ENCODE measurements at regions of chr5 and their contacts with region 1.

Region 1: GRCh38 chr5:157335534-157336422 is 69.9 kb downstream of the CYFIP2 start:
- DNase-seq: no peak
- ATAC-seq: peak in 4 of 8 donors; percentile 26 to 76 (median 51)
- H3K4me3 ChIP-seq: no peak overlapping the region
- H3K27ac ChIP-seq: peak overlapping the region in 1 of 10 donors; percentile 26
- H3K4me1 ChIP-seq: peaks cover 0 to 9% (median 0%) of the 10 kb centered on the region in 9 donors
- H3K27me3 ChIP-seq: no peaks in the 10 kb centered on the region
- CTCF ChIP-seq: no peak

Region 2: GRCh38 chr5:157366741-157367674 is 31.2 kb after region 1 on chr5:
- intact Hi-C with region 1: no loop called
- DNase-seq: peak in 1 of 2 donors; percentile 28
- ATAC-seq: peak in 5 of 8 donors; percentile 47 to 63 (median 60)
- H3K4me3 ChIP-seq: no peak overlapping the region
- H3K27ac ChIP-seq: no peak overlapping the region
- H3K4me1 ChIP-seq: peaks cover 0 to 12% (median 5%) of the 10 kb centered on the region in 9 donors
- H3K27me3 ChIP-seq: no peaks in the 10 kb centered on the region
- CTCF ChIP-seq: peak in 7 of 9 donors; percentile 33 to 62 (median 51)

Region 3: DNA sequence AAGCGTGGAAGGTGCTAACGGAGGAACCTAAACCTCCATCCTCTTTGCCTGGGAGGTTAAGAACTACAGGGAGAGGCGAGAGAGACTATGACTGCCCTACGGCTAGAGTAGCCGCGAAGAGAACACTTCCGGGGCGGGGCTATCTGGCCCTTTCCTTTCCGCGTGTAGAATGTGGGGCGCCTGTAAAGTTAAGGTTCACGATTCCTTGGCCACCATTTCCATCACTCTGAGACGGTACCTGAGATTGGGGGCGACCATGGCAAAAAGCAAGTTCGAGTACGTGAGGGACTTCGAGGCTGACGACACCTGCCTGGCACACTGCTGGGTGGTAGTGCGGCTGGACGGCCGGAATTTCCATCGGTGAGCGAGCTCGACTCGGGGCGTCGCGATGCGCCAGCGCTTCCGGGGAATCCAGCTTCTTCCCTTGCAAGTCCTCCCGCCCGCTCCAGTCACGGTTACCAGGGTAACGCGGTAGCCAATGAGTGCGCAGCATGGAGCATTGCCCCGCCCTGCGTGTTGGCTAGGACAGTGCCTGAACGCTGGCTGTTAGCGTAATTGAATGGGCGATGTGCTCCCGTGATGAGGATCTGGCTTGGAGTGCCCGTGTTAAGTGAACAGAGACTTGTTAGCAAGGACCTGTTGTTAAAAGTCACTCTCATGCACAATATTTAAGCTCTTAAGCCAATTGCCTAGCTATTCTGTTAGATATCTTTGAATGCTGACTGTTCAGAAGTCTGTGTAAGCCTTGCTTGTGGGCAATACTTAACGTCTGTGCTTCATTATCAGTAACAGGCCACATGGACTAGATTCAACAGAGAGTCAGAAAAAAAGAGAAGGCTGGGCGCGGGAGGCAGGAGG is 395.7 kb after region 1 on chr5 and contains the start of gene THG1L:
- intact Hi-C with region 1: loop called in 1 of 10 experiments (anchors 10 kb)
- DNase-seq: peak; percentile 97
- ATAC-seq: peak; percentile 99 to 100 (median 99)
- H3K4me3 ChIP-seq: peak within 1 kb of the TSS; percentile 27 to 83 (median 70)
- H3K27ac ChIP-seq: peak within 1 kb of the TSS; percentile 84 to 95 (median 90)
- H3K4me1 ChIP-seq: peaks cover 0 to 9% (median 6%) of the 10 kb centered on the region in 9 donors
- H3K27me3 ChIP-seq: no peaks in the 10 kb centered on the region
- CTCF ChIP-seq: peak in 1 of 9 donors; percentile 9
- total RNA-seq, gene THG1L: 3.4 to 9.5 (median 6.2) TPM